Activated T-helper 2 cell treated with anti-CD3 and anti-CD28 coated beads, Interferon-gamma antibody, Interleukin-2, Interleukin-4, amounts not matched to agents 10 μg/mL and 5 μg/mL and 100 μg/mL, durations not matched to agents 14 hours and 24 hours and 36 hours (primary cell): ENCODE measurements at regions of chr1 and their contacts with region 1.

Region 1: GRCh38 chr1:87953732-87954344 is 625.2 kb downstream of the LMO4 start:
- DNase-seq: peak; percentile 22
- H3K4me3 Mint-ChIP-seq: no peak overlapping the region
- H3K27ac Mint-ChIP-seq: no peak overlapping the region
- H3K4me1 Mint-ChIP-seq: no peaks in the 10 kb centered on the region
- H3K27me3 Mint-ChIP-seq: peaks cover 5% of the 10 kb centered on the region

Region 2: DNA sequence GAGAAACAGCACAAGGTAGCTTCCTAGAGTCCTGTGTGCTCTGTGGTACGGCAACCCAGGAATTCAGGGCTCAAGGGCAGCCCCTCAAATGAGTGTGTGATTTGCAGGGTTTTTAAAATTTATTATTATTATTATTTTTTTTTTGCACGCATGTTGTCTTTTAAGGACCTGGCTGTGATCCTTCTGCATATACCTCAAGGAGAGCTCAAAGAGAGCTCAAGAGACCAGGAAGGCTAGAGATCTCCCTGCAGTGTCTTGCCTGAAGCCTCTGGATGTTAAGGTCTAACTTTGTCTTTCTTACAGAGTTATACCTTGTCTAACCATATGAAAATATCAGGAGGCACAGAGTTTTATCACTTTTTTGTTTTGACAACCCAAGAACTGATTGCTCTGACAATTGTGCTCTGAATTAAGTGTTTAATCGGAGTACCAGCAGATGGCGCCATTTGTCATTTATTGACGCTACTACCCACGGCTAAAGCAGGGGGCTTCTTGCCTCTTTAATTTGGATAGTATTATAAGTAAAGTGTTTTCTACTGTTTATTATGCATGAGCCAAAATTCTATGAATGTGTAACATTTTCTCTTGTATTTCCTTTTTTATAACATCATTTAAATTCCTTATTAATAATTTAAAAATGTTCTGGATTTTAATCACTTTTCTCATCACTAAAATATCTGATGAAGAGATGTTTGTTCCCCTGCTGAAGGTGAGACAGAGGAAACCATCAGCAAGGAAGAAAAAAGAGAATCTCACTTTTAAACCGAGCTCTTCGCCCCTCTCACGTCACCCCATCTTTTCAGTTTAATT is 660.9 kb before region 1 on chr1:
- intact Hi-C with region 1: loop called (anchors 1 kb)
- DNase-seq: peak; percentile 15
- H3K4me3 Mint-ChIP-seq: no peak overlapping the region
- H3K27ac Mint-ChIP-seq: no peak overlapping the region
- H3K4me1 Mint-ChIP-seq: no peaks in the 10 kb centered on the region
- H3K27me3 Mint-ChIP-seq: no peaks in the 10 kb centered on the region

Region 3: DNA sequence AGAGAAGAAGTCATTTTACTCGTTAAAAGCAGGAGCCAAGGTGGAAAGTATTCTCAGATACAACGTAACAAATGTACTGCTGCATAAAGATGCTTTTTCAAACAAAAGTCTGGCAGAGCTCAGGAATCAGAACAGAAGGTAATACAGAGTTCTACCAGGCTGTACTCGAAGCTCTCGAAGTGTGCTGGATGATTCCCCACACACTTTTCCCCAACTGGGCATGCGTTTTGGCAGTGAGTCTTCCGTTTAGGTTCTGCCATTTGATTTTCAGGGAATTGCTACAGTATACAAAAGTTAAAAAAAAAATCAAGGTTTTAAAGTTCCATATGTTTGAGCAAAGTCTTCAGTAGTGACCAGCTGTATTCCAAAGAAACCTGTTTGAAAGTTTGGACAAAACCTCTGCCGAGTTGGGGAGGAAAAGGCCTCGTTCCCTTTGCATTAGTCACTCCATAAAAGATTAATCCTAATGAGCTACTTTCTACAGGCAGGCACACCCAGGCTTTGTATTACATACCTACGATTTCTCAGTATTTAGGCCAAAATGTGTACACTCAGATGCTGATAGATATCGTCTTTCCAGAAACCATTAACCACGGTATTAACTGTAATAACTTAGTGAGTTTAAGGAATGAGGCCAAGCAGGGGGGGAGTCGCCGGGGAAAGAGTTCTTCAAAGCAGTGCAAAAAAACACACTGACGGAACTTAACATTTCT is 148.0 kb before region 1 on chr1:
- intact Hi-C with region 1: no loop called
- DNase-seq: no peak
- H3K4me3 Mint-ChIP-seq: no peak overlapping the region
- H3K27ac Mint-ChIP-seq: no peak overlapping the region
- H3K4me1 Mint-ChIP-seq: no peaks in the 10 kb centered on the region
- H3K27me3 Mint-ChIP-seq: no peaks in the 10 kb centered on the region